Activated naive CD4-positive, alpha-beta T cell treated with anti-CD3 and anti-CD28 coated beads for 36 hours (primary cell): ENCODE measurements at regions of chr11 and their contacts with region 1.

Region 1: GRCh38 chr11:568306-569157 is 7.7 kb upstream of the PHRF1 start:
- DNase-seq: peak; percentile 89
- H3K4me3 Mint-ChIP-seq: peak overlapping the region; percentile 71
- H3K27ac Mint-ChIP-seq: no peak overlapping the region
- H3K4me1 Mint-ChIP-seq: peaks cover 2% of the 10 kb centered on the region
- H3K27me3 Mint-ChIP-seq: no peaks in the 10 kb centered on the region

Region 2: GRCh38 chr11:587978-588380 is 19.4 kb after region 1 on chr11:
- CTCF ChIA-PET with region 1: no interaction called
- intact Hi-C with region 1: loop called (anchors 2 kb)
- DNase-seq: peak; percentile 87
- H3K4me3 Mint-ChIP-seq: peak overlapping the region; percentile 70
- H3K27ac Mint-ChIP-seq: peak overlapping the region; percentile 99
- H3K4me1 Mint-ChIP-seq: peaks cover 25% of the 10 kb centered on the region
- H3K27me3 Mint-ChIP-seq: no peaks in the 10 kb centered on the region